Activated CD4-positive, alpha-beta T cell treated with anti-CD3 and anti-CD28 coated beads for 36 hours (primary cell): ENCODE measurements at regions of chr20 and their contacts with region 1.

Region 1: GRCh38 chr20:53001498-53002301 is 29.5 kb downstream of the TSHZ2 start:
- DNase-seq: peak; percentile 49
- ATAC-seq: peak; percentile 72
- H3K4me3 Mint-ChIP-seq: peak overlapping the region; percentile 65
- H3K27ac Mint-ChIP-seq: peak overlapping the region; percentile 99
- H3K4me1 Mint-ChIP-seq: peaks cover 82% of the 10 kb centered on the region
- H3K27me3 Mint-ChIP-seq: no peaks in the 10 kb centered on the region

Region 2: DNA sequence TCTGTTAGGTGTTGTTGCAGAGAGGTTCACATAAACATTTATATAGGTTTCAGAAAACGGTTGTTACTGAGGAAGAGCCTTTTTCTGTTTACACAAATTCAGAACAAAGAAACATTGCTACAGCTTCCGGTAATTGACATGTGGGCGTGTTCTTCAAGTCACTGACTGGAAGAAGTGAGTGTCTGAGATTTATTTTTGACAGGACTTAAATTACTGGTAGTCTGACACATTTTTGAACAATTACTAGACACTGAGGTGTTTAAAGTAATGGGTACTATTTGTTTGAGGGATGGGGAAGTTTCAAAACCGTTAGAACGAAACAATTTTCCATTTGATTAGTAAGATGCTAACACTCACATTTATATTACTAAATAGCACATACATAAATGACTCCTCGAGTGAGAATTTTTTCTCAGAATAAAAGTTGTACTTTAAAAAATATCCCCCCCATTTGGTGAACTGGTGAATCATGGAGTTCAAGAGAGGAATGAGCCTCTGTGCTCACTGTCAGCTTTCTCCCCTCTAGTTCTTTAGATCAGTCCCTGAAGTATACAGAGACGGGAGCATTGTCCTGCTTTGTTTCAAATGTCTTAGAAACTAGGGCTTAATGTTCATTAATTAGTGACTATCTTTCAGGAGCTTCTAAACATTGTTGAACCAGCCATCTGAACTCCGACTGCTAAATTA is 69.1 kb after region 1 on chr20:
- CTCF ChIA-PET with region 1: interaction called, 3 read pairs
- POLR2A ChIA-PET with region 1: interaction called, 4 read pairs
- intact Hi-C with region 1: loop called (anchors 1 to 2 kb)
- DNase-seq: peak; percentile 64
- ATAC-seq: peak; percentile 77
- H3K4me3 Mint-ChIP-seq: peak overlapping the region; percentile 24
- H3K27ac Mint-ChIP-seq: peak overlapping the region; percentile 93
- H3K4me1 Mint-ChIP-seq: peaks cover 54% of the 10 kb centered on the region
- H3K27me3 Mint-ChIP-seq: peaks cover 3% of the 10 kb centered on the region

Region 3: GRCh38 chr20:53138454-53139262 is 137.0 kb after region 1 on chr20:
- CTCF ChIA-PET with region 1: no interaction called
- POLR2A ChIA-PET with region 1: no interaction called
- intact Hi-C with region 1: no loop called
- DNase-seq: peak; percentile 46
- ATAC-seq: peak; percentile 89
- H3K4me3 Mint-ChIP-seq: no peak overlapping the region
- H3K27ac Mint-ChIP-seq: peak overlapping the region; percentile 69
- H3K4me1 Mint-ChIP-seq: peaks cover 41% of the 10 kb centered on the region
- H3K27me3 Mint-ChIP-seq: peaks cover 4% of the 10 kb centered on the region

Region 4: GRCh38 chr20:53370345-53370961 is 368.8 kb after region 1 on chr20:
- CTCF ChIA-PET with region 1: no interaction called
- POLR2A ChIA-PET with region 1: no interaction called
- intact Hi-C with region 1: no loop called
- DNase-seq: no peak
- ATAC-seq: no peak
- H3K4me3 Mint-ChIP-seq: no peak overlapping the region
- H3K27ac Mint-ChIP-seq: no peak overlapping the region
- H3K4me1 Mint-ChIP-seq: peaks cover 15% of the 10 kb centered on the region
- H3K27me3 Mint-ChIP-seq: no peaks in the 10 kb centered on the region

Region 5: DNA sequence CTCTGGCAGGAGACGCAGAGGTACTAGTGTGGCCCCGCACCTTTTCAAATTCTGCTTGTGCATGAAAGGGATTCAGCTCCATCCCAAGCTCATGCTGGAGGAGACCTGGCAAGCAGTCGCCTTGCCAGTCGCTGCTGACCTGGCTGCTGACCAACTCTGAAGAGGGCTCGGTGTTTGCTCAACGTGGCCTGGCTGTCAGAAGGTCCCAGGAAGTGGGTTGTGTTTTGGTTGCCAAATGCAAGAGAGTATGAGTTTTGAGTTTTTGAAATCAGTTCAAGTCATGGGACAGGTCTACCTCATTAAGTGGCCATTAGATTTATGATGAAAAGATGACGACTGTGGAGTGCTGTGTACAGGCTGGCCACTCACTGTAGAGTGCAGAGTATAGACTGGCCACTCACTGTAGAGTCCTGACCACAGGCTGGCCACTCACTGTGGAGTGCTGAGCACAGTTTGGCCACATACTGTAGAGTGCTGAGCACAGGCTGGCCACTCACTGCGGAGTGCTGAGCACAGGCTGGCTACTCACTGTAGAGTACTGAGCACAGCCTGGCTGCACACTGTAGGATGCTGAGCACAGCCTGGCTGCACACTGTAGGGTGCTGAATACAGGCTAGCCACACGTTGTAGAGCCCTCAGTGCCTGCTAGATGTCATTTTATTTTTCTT is 398.0 kb after region 1 on chr20:
- CTCF ChIA-PET with region 1: no interaction called
- POLR2A ChIA-PET with region 1: interaction called, 10 read pairs
- intact Hi-C with region 1: no loop called
- DNase-seq: no peak
- ATAC-seq: no peak
- H3K4me3 Mint-ChIP-seq: no peak overlapping the region
- H3K27ac Mint-ChIP-seq: no peak overlapping the region
- H3K4me1 Mint-ChIP-seq: peaks cover 16% of the 10 kb centered on the region
- H3K27me3 Mint-ChIP-seq: no peaks in the 10 kb centered on the region